ENCODE measurements at regions of chr3 and their contacts with region 1.

Region 1: DNA sequence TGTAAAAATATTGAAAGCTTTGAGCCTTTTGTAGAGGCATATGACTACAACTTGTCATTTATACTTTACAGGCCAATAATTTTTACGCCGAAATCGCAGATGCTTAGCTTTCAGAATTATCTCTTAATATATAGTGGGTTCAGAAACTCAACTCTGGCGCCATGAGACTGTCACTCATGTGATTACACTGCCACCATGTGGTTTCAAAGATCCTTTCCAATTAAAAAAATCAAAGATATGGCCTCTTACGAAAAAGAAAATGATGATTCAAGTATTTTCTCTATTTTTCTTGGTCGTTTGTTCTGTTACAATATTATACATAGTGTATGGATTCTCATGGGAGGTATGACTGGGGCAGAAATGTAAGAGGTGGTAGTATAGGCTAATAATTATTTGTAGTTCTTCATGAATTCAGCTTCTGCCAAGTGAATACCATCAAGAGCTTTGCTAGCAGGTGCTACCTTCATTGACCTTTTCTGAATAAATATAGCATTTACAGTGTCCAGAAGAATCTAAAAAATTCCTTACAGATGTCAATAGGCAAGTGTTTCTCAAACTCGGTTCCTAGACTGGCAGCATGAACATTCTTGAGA is 751.7 kb upstream of the GOLIM4 start:
- DNase-seq: peak in 1 of 2 experiments; percentile 16
- ATAC-seq: peak in 1 of 2 experiments; percentile 60; a peak in 2 of 6 replicates
- H3K4me3 ChIP-seq: no peak overlapping the region
- H3K27ac ChIP-seq: no peak overlapping the region
- H3K4me1 ChIP-seq: no peaks in the 10 kb centered on the region
- CTCF ChIP-seq: peak; percentile 54
- EP300 ChIP-seq: no peak
- POLR2A ChIP-seq: no peak
- RAD21 ChIP-seq: peak; percentile 65 to 75

Region 2: GRCh38 chr3:168212664-168213285 is 634.6 kb before region 1 on chr3:
- CTCF ChIA-PET with region 1: interaction called, 57 read pairs
- POLR2A ChIA-PET with region 1: no interaction called
- DNase-seq: no peak
- ATAC-seq: no peak
- H3K4me3 ChIP-seq: no peak overlapping the region
- H3K27ac ChIP-seq: no peak overlapping the region
- H3K4me1 ChIP-seq: no peaks in the 10 kb centered on the region
- CTCF ChIP-seq: no peak
- EP300 ChIP-seq: no peak
- POLR2A ChIP-seq: no peak
- RAD21 ChIP-seq: no peak

Region 3: GRCh38 chr3:168834558-168834957 is 12.8 kb before region 1 on chr3:
- CTCF ChIA-PET with region 1: interaction called, 12 read pairs
- POLR2A ChIA-PET with region 1: no interaction called
- DNase-seq: no peak
- ATAC-seq: no peak
- H3K4me3 ChIP-seq: no peak overlapping the region
- H3K27ac ChIP-seq: no peak overlapping the region
- H3K4me1 ChIP-seq: no peaks in the 10 kb centered on the region
- CTCF ChIP-seq: no peak
- EP300 ChIP-seq: no peak
- POLR2A ChIP-seq: no peak
- RAD21 ChIP-seq: no peak